ENCODE measurements at regions of chr14 and their contacts with region 1.

Region 1: DNA sequence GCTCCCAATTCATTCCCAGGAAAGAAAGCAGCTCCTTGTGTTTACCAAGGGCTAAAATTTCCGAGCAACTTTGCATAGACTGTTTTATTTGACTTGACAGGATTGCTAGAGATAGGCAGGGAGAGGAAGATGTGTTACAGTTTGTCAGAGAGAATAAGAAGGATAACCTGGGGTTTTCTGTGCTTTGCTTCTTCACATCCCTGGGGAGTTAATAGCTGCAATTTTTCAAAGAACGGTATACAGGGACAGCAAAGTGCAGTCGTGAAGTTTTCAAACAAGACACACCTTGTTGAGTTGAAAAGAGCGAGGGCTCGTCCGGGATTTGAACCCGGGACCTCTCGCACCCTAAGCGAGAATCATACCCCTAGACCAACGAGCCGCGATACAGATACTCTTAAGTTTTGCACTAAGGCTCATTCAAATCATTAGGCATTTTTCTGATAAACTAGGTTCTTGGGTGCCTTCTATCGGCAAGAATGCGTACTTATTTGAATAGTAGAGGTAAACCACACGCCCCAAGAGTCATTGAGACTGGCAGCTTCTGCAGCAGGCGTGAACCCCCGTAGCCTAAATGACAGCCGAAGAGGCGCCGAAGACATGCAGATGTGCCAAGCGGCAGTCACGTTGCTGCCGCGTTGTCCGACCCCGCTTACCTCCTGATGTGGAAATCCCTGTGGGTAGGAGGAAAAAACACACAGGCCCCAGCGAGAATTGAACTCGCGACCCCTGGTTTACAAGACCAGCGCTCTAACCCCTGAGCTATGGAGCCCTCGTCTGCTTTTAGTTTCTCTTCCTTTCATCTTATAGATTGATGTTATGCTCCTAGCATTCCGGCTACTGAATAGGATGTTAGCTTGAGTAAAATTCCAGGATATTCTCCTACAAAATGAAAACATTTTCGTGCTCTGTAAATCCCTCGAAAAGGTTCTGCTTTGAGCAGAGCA is 22.2 kb upstream of the RNASE12 start:
- DNase-seq: peak; percentile 71

Region 2: DNA sequence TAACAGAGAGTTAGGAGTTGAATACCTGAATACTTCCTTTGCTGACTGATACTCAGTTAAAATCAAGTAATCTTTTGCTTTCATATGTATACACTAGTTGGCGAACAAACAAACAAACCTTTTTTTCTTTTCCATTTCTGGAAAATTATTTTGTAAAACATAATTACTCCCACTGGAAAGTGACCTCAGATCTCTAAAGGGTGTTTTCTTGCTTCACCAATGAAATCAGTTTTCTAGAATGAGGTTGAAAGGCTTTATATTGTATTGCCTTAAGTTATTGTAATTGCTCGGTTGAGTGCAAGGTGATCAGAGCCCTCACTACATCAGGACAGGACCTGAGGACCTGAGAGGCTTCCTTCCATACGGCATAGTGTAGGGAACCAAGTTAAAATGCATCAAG is 682.7 kb before region 1 on chr14 and contains the start of gene OR4K1:
- CTCF ChIA-PET with region 1: no interaction called
- POLR2A ChIA-PET with region 1: no interaction called
- DNase-seq: no peak

Region 3: GRCh38 chr14:20530771-20531571 is 82.4 kb before region 1 on chr14:
- CTCF ChIA-PET with region 1: interaction called, 19 read pairs
- POLR2A ChIA-PET with region 1: no interaction called
- DNase-seq: peak; percentile 66

Region 4: DNA sequence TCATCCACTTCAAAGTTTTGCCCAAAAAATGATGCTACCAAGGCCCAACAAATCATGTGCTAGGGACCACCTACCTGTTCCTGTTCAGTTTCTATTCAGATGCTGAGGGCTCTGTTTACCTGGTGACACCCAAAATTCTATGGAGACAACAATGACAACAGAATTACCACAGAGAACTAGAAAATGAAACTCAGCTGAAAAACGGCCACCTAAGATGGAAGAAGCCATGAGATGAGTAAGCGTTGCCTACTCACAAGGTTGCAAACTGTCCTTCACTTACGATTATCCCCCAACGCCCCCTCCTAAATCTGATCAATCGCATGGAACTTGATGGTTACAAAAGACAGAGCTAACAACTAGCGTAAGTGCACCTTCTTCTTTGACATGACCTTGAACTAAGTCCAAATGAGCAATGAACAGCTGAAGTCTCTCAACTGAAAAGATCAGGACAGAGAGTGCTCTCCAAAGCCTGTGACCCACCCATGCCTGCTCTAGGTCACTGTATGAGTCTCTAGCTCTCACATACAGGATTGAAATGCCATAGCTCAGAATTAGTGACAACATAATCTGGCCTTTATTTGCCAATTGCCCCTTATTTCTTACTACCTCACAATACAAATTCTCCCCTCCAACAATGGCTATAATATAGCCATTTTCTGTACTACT is 25.7 kb before region 1 on chr14 and contains the start of gene RNASE11:
- CTCF ChIA-PET with region 1: no interaction called
- POLR2A ChIA-PET with region 1: no interaction called
- DNase-seq: no peak

Region 5: DNA sequence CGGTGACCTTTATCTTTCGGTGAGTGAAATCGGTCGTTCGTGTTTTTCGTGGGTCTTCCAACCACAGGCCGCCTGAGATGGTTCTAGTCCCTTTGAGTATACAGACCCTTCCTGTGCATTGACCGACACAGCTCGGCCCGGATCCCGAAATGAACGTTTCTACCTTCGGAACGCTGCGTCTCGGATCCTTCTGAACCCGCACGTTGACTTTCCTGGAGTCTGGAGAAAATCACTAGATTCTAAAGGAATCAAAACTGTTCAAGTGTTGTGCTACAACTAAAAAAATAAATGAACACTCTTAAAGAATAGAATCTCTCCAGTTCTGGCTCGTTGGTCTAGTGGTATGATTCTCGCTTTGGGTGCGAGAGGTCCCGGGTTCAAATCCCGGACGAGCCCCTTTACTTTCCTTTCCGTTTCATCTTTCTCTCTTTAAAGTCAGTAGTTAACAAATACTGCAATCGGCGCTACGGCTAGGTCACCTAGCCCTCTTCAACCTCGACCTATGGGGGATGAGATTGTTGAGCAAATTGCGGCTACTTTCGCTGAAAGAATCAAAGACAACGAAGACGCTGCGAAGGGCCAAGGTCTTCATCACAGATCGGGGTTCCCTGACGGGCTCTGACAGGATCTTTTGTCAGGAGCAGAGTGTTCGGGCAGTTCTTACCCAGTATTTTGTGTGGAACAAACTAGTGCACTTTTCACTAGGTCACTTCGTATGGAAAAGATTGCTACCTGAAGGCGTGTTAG is 19.5 kb after region 1 on chr14:
- CTCF ChIA-PET with region 1: interaction called, 15 read pairs
- POLR2A ChIA-PET with region 1: interaction called, 20 read pairs
- DNase-seq: peak; percentile 65

Region 6: DNA sequence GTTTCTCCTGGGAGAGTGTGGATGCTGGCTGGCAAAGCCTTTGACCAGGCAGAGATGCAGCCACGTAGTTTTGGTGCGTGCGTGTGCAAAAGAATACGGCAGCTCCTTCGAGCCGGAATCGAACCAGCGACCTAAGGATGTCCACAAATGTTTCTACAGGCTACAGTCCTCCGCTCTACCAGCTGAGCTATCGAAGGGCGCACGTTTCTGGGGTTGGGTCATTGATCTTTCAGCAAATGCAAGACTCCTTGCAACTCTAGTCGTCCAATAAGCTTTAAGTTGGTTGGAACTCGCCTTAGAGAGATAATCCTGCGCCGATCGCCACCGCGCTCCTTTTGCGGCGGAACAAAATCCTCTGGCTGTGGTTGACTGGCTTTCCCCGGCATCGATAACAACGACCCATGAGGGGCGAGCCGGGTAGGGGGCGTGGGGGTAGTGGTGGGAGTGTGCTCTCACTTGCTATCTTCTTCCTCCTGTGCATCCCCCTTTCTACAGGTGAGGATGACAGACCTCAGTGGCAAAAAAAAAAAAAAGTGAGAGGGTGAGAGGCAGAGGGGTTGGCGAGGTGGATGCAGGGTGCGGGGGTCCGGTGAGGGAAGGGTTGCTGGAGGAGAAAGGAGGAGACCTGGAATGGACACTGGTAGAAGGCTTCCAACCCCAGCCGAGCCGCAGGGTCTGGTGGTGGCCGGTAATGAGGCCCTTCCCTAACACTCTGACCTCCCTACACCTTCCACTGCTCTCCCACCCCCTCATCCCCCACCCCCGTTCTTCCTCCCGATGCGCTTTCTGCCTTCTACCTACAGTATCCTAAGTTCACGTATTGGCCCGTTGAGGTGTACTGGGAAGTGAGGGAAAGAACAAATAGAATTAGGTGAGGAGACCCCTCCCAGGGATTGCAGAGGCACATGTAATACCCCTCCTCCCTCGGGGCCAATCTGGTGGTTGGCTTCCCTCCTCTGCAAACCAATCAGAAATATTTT is 39.9 kb after region 1 on chr14:
- CTCF ChIA-PET with region 1: interaction called, 5 read pairs
- POLR2A ChIA-PET with region 1: interaction called, 10 read pairs
- DNase-seq: peak; percentile 66

Region 7: GRCh38 chr14:20690848-20691523 is 77.6 kb after region 1 on chr14:
- CTCF ChIA-PET with region 1: interaction called, 15 read pairs
- POLR2A ChIA-PET with region 1: interaction called, 8 read pairs
- DNase-seq: peak; percentile 65

Region 8: GRCh38 chr14:20707622-20708021 is 94.3 kb after region 1 on chr14:
- CTCF ChIA-PET with region 1: no interaction called
- POLR2A ChIA-PET with region 1: no interaction called
- DNase-seq: no peak